ENCODE measurements at regions of chr17 and their contacts with region 1.

Region 1: GRCh38 chr17:59004338-59005111 is 102.2 kb downstream of the TRIM37 start:
- DNase-seq: peak; percentile 48 to 88 (median 73)
- H3K4me3 ChIP-seq: no peak overlapping the region
- H3K27ac ChIP-seq: no peak overlapping the region
- H3K4me1 ChIP-seq: peaks cover 9 to 15% of the 10 kb centered on the region in 2 donors
- H3K27me3 ChIP-seq: no peaks in the 10 kb centered on the region
- CTCF ChIP-seq: peak; percentile 92 to 98 (median 96)
- POLR2A ChIP-seq: no peak

Region 2: GRCh38 chr17:58520843-58521430 is 483.6 kb before region 1 on chr17:
- intact Hi-C with region 1: loop called in 1 of 2 experiments (anchors 10 kb)
- DNase-seq: peak in 1 of 7 donors; percentile 45
- H3K4me3 ChIP-seq: no peak overlapping the region
- H3K27ac ChIP-seq: peak overlapping the region in 2 of 5 donors; percentile 19 to 39
- H3K4me1 ChIP-seq: peaks cover 19 to 53% of the 10 kb centered on the region in 2 donors
- H3K27me3 ChIP-seq: no peaks in the 10 kb centered on the region
- CTCF ChIP-seq: peak in 4 of 6 experiments; percentile 19 to 33 (median 28)
- POLR2A ChIP-seq: no peak

Region 3: DNA sequence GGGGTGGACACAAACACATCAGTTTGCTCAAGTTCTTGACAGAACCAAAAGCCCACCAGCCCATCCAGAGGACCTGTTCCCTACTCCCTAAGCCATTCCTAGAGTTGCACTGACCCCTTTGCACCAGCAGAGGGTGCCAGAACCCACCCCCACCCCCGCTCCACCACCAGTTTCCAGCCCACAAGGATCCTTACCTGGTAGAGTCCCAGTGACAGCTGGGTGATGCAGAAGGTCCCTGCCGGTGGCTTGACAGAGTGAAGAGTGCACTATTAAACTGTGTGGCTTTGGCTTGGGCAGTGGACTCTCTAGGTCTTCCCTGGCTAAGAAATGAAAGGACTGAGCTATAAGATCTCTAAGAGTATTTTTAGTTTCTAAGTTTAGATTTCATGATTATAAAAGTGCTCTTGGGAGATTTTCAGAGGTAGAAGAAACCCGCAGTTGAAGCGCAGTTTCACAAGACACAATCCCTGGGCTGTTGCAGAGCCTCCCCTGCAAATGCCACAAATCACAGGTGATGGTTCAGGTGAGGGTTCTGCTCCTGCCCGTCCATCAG is 416.7 kb before region 1 on chr17:
- intact Hi-C with region 1: loop called in 1 of 2 experiments (anchors 5 kb)
- DNase-seq: peak; percentile 42 to 70 (median 51)
- H3K4me3 ChIP-seq: no peak overlapping the region
- H3K27ac ChIP-seq: no peak overlapping the region
- H3K4me1 ChIP-seq: no peaks in the 10 kb centered on the region
- H3K27me3 ChIP-seq: no peaks in the 10 kb centered on the region
- CTCF ChIP-seq: peak; percentile 50 to 88 (median 78)
- POLR2A ChIP-seq: no peak

Region 4: DNA sequence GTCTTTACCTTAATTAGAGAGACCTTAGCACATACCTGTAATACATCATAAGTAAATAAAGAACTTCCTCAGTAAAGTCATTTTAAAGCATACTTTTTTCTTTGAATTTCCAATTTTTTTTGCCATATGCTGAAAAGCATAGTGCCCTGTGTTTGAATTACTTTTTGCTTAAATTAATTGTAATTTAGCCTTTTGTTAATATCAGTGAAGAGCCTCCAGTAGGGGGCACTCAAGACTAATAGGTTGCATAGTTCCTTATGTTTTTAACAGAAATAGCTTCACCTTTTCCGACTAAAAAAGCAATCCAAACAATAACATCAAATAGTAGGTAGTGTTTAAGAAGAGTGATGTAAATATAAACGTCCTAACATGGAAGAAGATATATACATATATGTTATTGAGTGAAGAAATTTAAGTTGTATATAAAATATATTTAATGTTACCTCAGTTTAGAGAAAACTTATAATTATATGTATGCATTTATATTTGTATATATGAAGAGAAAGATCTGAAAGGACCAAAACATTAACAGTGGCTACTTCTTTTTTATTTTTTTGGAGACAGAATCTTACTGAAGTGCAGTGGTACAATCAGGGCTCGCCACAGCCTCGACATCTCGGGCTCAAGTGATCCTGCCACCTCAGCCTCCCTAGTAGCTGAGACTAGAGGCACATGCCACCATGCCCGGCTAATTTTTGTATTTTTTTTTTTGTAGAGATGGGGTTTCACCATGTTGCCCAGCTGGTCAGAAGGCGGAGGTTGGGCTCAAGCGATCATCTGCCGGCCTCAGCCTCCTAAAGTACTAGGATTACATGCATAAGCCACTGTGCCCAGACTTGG is 293.4 kb before region 1 on chr17:
- intact Hi-C with region 1: loop called (anchors 2 to 5 kb)
- DNase-seq: peak in 6 of 7 donors; percentile 26 to 78 (median 64)
- H3K4me3 ChIP-seq: no peak overlapping the region
- H3K27ac ChIP-seq: no peak overlapping the region
- H3K4me1 ChIP-seq: no peaks in the 10 kb centered on the region
- H3K27me3 ChIP-seq: no peaks in the 10 kb centered on the region
- CTCF ChIP-seq: peak; percentile 63 to 86 (median 76)
- POLR2A ChIP-seq: no peak

Region 5: GRCh38 chr17:59521204-59522126 is 516.9 kb after region 1 on chr17:
- intact Hi-C with region 1: no loop called
- DNase-seq: peak; percentile 66 to 85 (median 80)
- H3K4me3 ChIP-seq: no peak overlapping the region
- H3K27ac ChIP-seq: peak overlapping the region in 4 of 5 donors; percentile 4 to 69 (median 64)
- H3K4me1 ChIP-seq: peaks cover 0 to 12% of the 10 kb centered on the region in 2 donors
- H3K27me3 ChIP-seq: no peaks in the 10 kb centered on the region
- CTCF ChIP-seq: peak; percentile 82 to 90 (median 86)
- POLR2A ChIP-seq: no peak

Measured in adrenal gland (tissue), 19 donors.